Activated T-helper 1 cell treated with anti-CD3 and anti-CD28 coated beads, Interleukin-12 subunit alpha, Interleukin-12 subunit beta, Interleukin-2, Interleukin-4 antibody, amounts not matched to agents 30 ng/mL and 10 ng/mL and 1 ng/mL, durations not matched to agents 14 hours and 24 hours and 36 hours (primary cell): ENCODE measurements at regions of chr19 and their contacts with region 1.

Region 1: GRCh38 chr19:24086974-24087595 is at the start of gene ZNF254:
- DNase-seq: peak; percentile 77
- H3K4me3 Mint-ChIP-seq: peak within 1 kb of the TSS; percentile 95
- H3K27ac Mint-ChIP-seq: peak within 1 kb of the TSS; percentile 95
- H3K4me1 Mint-ChIP-seq: no peaks in the 10 kb centered on the region
- H3K27me3 Mint-ChIP-seq: no peaks in the 10 kb centered on the region
- total RNA-seq, gene ZNF254: 7.8 and 8.4 TPM in 2 replicates

Region 2: GRCh38 chr19:23914402-23915301 is 172.4 kb before region 1 on chr19 and contains the start of gene ZNF726:
- intact Hi-C with region 1: loop called (anchors 2 kb)
- DNase-seq: peak; percentile 82
- H3K4me3 Mint-ChIP-seq: peak within 1 kb of the TSS; percentile 95
- H3K27ac Mint-ChIP-seq: peak within 1 kb of the TSS; percentile 95
- H3K4me1 Mint-ChIP-seq: no peaks in the 10 kb centered on the region
- H3K27me3 Mint-ChIP-seq: no peaks in the 10 kb centered on the region
- total RNA-seq, gene ZNF726: 10.7 and 12.6 TPM in 2 replicates

Region 3: DNA sequence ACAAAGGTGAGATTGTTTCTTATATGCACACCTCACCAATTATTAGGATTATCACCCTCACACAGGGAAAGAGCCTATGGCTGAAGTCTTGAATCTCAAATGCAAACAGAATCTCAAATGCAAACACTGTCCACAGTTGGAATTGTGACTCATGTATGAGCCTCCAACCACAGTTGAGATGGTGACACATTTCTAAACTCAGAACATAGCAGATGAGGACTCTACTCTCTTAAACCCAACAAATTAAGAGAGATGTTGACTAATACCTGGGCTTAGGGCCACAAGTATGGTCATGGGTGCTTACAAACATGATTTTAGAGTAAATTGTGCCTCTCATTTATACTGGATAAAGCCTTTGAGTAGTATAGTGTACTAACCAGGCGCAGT is 32.5 kb before region 1 on chr19:
- intact Hi-C with region 1: loop called (anchors 5 kb)
- DNase-seq: no peak
- H3K4me3 Mint-ChIP-seq: no peak overlapping the region
- H3K27ac Mint-ChIP-seq: peak overlapping the region; percentile 59
- H3K4me1 Mint-ChIP-seq: peaks cover 17% of the 10 kb centered on the region
- H3K27me3 Mint-ChIP-seq: no peaks in the 10 kb centered on the region

Region 4: GRCh38 chr19:24178207-24178606 is 91.1 kb after region 1 on chr19:
- intact Hi-C with region 1: no loop called
- DNase-seq: no peak
- H3K4me3 Mint-ChIP-seq: no peak overlapping the region
- H3K27ac Mint-ChIP-seq: no peak overlapping the region
- H3K4me1 Mint-ChIP-seq: no peaks in the 10 kb centered on the region
- H3K27me3 Mint-ChIP-seq: no peaks in the 10 kb centered on the region